ENCODE measurements at regions of chr10 and their contacts with region 1.

Region 1: DNA sequence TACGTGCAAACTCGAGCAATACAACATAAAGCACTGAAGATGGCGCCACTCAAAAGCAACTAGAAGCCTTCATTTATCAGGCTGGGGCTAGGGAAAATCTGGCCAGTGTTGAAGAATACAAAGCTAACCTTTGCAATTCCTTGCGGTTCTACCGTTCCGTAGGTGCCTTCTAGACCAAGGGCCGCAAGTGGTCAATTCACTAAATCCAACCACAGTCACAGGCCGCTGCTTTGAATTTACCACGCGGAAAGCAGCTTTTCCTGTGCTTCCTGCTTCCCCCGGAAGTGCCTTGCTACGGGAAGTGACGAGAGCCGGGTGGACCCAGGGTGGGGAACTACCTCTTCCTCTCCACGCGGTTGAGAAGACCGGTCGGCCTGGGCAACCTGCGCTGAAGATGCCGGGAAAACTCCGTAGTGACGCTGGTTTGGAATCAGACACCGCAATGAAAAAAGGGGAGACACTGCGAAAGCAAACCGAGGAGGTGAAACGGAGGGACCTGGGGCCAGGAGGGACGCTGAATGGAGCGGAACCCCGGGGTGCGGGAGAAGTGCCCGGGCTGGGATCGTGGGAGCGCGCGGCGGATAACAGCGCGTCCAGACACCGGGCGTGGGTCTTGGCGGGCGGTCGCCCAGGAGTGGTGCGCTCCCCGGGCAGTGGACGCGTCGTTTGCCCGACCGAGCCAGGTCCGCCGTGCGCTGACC is at the start of gene DDX21:
- DNase-seq: peak; percentile 94
- H3K4me3 Mint-ChIP-seq: peak within 1 kb of the TSS; percentile 100
- H3K27ac Mint-ChIP-seq: peak within 1 kb of the TSS; percentile 100
- H3K4me1 Mint-ChIP-seq: peaks cover 44% of the 10 kb centered on the region
- H3K27me3 Mint-ChIP-seq: no peaks in the 10 kb centered on the region
- total RNA-seq, gene DDX21: 155 to 164 TPM

Region 2: DNA sequence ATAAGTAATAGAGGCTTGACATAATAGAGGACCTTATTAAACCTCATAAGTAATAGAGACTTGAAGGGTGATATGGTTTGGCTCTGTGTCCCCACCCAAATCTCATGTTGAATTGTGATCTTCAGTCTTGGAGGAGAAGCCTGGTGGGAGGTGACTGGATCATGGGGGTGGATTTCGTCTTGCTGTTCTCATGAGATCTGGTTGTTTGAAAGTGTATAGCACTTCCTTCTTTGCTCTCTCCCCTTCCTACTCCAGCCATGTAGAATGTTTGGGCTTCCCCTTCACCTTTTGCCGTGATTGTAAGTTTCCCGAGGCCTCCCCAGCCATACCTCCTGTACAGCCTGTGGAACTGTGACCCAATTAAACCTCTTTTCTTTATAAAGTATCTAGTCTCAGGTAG is 41.2 kb after region 1 on chr10:
- CTCF ChIA-PET with region 1: no interaction called
- intact Hi-C with region 1: loop called (anchors 2 kb)
- DNase-seq: no peak
- H3K4me3 Mint-ChIP-seq: no peak overlapping the region
- H3K27ac Mint-ChIP-seq: peak overlapping the region; percentile 90
- H3K4me1 Mint-ChIP-seq: peaks cover 47% of the 10 kb centered on the region
- H3K27me3 Mint-ChIP-seq: no peaks in the 10 kb centered on the region

Region 3: DNA sequence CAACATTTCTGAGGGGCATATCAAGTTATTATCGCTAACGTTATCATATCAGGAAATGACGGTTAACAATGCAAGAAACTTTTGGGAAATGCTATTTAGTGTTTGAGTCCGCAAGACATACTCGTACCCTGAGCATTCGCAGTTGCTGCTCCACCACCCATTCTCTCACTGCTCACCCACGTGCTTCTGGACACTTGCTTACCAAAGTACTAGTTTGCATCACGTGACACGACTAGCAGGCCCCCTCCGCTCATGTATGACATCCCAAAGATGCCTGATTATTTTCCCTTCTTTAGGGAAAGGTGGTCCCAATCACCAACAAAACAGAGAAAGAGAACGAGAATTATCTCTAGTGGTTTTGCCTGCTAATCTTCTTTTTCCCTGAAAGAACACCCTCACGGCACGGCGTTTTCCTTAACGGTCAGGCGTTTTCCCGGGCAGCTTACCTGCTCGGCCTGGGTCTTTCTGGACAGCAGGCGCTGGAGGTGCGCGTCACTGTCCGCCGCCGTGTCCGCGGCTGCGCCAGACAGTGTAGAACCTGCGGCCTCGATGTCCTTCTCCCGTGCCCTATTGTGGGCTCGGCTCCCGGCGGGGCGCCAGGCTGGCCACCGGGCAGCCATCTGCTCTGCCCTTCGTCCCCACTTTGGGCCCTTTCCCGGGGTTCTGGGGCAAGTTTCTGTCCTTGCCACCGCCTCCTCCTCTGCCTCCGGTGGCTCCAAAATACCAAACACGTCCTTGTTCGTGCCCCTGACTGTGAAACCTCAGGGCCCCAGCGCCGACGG is 224.0 kb after region 1 on chr10 and contains the start of gene SUPV3L1:
- CTCF ChIA-PET with region 1: no interaction called
- intact Hi-C with region 1: loop called (anchors 1 kb)
- DNase-seq: peak; percentile 92
- H3K4me3 Mint-ChIP-seq: peak within 1 kb of the TSS; percentile 92
- H3K27ac Mint-ChIP-seq: peak within 1 kb of the TSS; percentile 98
- H3K4me1 Mint-ChIP-seq: peaks cover 32% of the 10 kb centered on the region
- H3K27me3 Mint-ChIP-seq: no peaks in the 10 kb centered on the region
- total RNA-seq, gene SUPV3L1: 38.4 to 41.1 TPM

Region 4: GRCh38 chr10:69318106-69318866 is 362.3 kb after region 1 on chr10:
- CTCF ChIA-PET with region 1: no interaction called
- intact Hi-C with region 1: loop called (anchors 1 kb)
- DNase-seq: peak; percentile 93
- H3K4me3 Mint-ChIP-seq: peak overlapping the region; percentile 98
- H3K27ac Mint-ChIP-seq: peak overlapping the region; percentile 93
- H3K4me1 Mint-ChIP-seq: peaks cover 46% of the 10 kb centered on the region
- H3K27me3 Mint-ChIP-seq: no peaks in the 10 kb centered on the region